BJ (cell line): ENCODE measurements at regions of chr17 and their contacts with region 1.

Region 1: GRCh38 chr17:75430159-75430974 is 24.9 kb upstream of the GRB2 start:
- DNase-seq: peak; percentile 68
- H3K4me3 ChIP-seq: peak overlapping the region; percentile 15
- H3K27me3 ChIP-seq: no peaks in the 10 kb centered on the region
- CTCF ChIP-seq: peak; percentile 19; the same call in 1 of the 2 replicates

Region 2: GRCh38 chr17:75345514-75346167 is 84.7 kb before region 1 on chr17:
- CTCF ChIA-PET with region 1: no interaction called
- POLR2A ChIA-PET with region 1: no interaction called
- DNase-seq: no peak
- H3K4me3 ChIP-seq: no peak overlapping the region
- H3K27me3 ChIP-seq: no peaks in the 10 kb centered on the region
- CTCF ChIP-seq: no peak

Region 3: GRCh38 chr17:75515496-75516254 is 85.3 kb after region 1 on chr17 and contains the start of gene CASKIN2:
- CTCF ChIA-PET with region 1: interaction called, 25 read pairs
- POLR2A ChIA-PET with region 1: no interaction called
- DNase-seq: peak; percentile 42
- H3K4me3 ChIP-seq: peak within 1 kb of the TSS; percentile 83
- H3K27me3 ChIP-seq: no peaks in the 10 kb centered on the region
- CTCF ChIP-seq: peak; percentile 92
- polyA plus RNA-seq, gene CASKIN2: 2.3 and 4.8 TPM in 2 replicates